Gastrocnemius medialis (tissue), 4 donors: ENCODE measurements at regions of chr4 and their contacts with region 1.

Region 1: GRCh38 chr4:100306018-100306417 is 115.8 kb upstream of the DDIT4L start:
- DNase-seq: no peak
- ATAC-seq: no peak
- H3K4me3 ChIP-seq: no peak overlapping the region
- H3K27ac ChIP-seq: peak overlapping the region; percentile 66 to 87 (median 77)
- H3K4me1 ChIP-seq: peaks cover 22 to 33% of the 10 kb centered on the region in 2 donors
- H3K27me3 ChIP-seq: no peaks in the 10 kb centered on the region
- CTCF ChIP-seq: no peak
- POLR2A ChIP-seq: no peak

Region 2: DNA sequence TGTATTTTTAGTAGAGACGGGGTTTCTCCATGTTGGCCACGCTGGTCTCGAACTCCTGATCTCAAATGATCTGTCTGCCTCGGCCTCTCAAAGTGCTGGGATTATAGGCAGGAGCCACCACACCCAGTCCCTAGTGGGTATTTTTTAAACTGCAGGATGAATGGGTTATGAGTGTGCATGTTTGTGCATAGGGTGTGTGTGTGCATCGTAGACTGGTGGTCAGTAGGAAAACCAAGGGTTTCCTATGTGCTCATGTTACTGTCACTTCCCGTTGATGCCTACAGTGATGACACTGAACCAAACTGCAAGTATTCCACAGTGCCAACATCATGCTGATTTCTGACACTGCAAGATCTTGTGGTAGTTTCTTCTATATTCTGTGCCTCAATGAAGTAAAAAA is 156.8 kb before region 1 on chr4:
- in situ Hi-C with region 1: no loop called
- intact Hi-C with region 1: no loop called
- DNase-seq: no peak
- ATAC-seq: no peak
- H3K4me3 ChIP-seq: no peak overlapping the region
- H3K27ac ChIP-seq: no peak overlapping the region
- H3K4me1 ChIP-seq: peaks cover 0 to 12% of the 10 kb centered on the region in 2 donors
- H3K27me3 ChIP-seq: no peaks in the 10 kb centered on the region
- CTCF ChIP-seq: no peak
- POLR2A ChIP-seq: no peak

Region 3: GRCh38 chr4:100168521-100168920 is 137.5 kb before region 1 on chr4:
- in situ Hi-C with region 1: no loop called
- intact Hi-C with region 1: loop called (anchors 5 kb)
- DNase-seq: no peak
- ATAC-seq: no peak
- H3K4me3 ChIP-seq: no peak overlapping the region
- H3K27ac ChIP-seq: peak overlapping the region in 1 of 4 donors; percentile 43
- H3K4me1 ChIP-seq: peaks cover 31 to 47% of the 10 kb centered on the region in 2 donors
- H3K27me3 ChIP-seq: no peaks in the 10 kb centered on the region
- CTCF ChIP-seq: no peak
- POLR2A ChIP-seq: no peak

Region 4: DNA sequence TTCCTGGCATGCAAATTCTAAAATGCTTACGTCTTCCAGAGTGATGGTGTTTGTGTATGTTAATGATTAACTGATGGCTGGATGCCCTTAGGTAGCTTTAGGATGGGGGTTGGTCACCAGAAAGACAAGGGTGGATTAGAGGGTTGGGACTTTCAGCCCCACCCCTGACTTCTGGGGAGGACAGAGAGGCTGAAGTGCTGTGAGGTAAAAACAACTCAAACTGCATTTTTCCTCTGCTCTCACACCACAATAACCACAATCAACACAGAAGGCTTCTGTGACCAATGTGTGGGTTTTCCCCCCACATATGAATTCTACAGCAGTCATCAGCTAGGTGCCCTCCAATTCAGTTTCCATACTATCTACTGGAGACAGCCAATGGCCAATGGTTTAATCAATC is 97.1 kb before region 1 on chr4:
- in situ Hi-C with region 1: no loop called
- intact Hi-C with region 1: loop called (anchors 5 kb)
- DNase-seq: no peak
- ATAC-seq: no peak
- H3K4me3 ChIP-seq: no peak overlapping the region
- H3K27ac ChIP-seq: no peak overlapping the region
- H3K4me1 ChIP-seq: peaks cover 16 to 23% of the 10 kb centered on the region in 2 donors
- H3K27me3 ChIP-seq: no peaks in the 10 kb centered on the region
- CTCF ChIP-seq: no peak
- POLR2A ChIP-seq: no peak

Region 5: GRCh38 chr4:100248476-100248875 is 57.5 kb before region 1 on chr4:
- in situ Hi-C with region 1: loop called in 1 of 4 experiments (anchors 10 kb)
- intact Hi-C with region 1: loop called (anchors 2 kb)
- DNase-seq: no peak
- ATAC-seq: peak; percentile 26 to 57
- H3K4me3 ChIP-seq: no peak overlapping the region
- H3K27ac ChIP-seq: peak overlapping the region; percentile 12 to 64 (median 53)
- H3K4me1 ChIP-seq: peaks cover 16 to 30% of the 10 kb centered on the region in 2 donors
- H3K27me3 ChIP-seq: no peaks in the 10 kb centered on the region
- CTCF ChIP-seq: no peak
- POLR2A ChIP-seq: no peak

Region 6: DNA sequence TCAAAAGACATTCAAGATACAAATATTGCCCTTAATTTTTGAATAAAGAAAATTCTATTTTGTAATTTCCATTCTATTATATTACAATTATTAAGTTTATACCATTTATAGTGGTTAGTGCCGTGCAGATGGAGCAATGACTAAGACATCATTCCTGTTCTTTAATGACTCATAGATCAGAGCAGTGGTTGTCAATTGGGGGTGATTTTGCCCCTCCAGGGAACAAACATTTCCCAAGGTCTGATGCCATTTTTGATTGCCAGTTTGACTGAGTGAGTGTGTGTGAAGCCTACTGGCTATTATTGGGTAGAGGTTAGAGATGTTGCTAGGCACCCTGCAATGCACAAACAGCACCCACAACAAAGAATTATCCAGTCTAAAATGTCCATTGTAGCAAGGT is 17.9 kb before region 1 on chr4:
- in situ Hi-C with region 1: no loop called
- intact Hi-C with region 1: loop called (anchors 2 kb)
- DNase-seq: no peak
- ATAC-seq: no peak
- H3K4me3 ChIP-seq: no peak overlapping the region
- H3K27ac ChIP-seq: peak overlapping the region; percentile 47 to 87 (median 72)
- H3K4me1 ChIP-seq: peaks cover 29 to 65% of the 10 kb centered on the region in 2 donors
- H3K27me3 ChIP-seq: no peaks in the 10 kb centered on the region
- CTCF ChIP-seq: no peak
- POLR2A ChIP-seq: no peak